ENCODE measurements at regions of chr10 and their contacts with region 1.

Region 1: GRCh38 chr10:69506834-69507721 is 55.8 kb downstream of the TSPAN15 start:
- DNase-seq: peak; percentile 28
- CTCF ChIP-seq: no peak

Region 2: GRCh38 chr10:69425511-69426298 is 81.4 kb before region 1 on chr10:
- in situ Hi-C with region 1: loop called (anchors 10 kb)
- DNase-seq: no peak
- CTCF ChIP-seq: no peak